Activated B cell treated with CpG ODN at 0.5 μM for 24 hours (primary cell): ENCODE measurements at regions of chr5 and their contacts with region 1.

Region 1: DNA sequence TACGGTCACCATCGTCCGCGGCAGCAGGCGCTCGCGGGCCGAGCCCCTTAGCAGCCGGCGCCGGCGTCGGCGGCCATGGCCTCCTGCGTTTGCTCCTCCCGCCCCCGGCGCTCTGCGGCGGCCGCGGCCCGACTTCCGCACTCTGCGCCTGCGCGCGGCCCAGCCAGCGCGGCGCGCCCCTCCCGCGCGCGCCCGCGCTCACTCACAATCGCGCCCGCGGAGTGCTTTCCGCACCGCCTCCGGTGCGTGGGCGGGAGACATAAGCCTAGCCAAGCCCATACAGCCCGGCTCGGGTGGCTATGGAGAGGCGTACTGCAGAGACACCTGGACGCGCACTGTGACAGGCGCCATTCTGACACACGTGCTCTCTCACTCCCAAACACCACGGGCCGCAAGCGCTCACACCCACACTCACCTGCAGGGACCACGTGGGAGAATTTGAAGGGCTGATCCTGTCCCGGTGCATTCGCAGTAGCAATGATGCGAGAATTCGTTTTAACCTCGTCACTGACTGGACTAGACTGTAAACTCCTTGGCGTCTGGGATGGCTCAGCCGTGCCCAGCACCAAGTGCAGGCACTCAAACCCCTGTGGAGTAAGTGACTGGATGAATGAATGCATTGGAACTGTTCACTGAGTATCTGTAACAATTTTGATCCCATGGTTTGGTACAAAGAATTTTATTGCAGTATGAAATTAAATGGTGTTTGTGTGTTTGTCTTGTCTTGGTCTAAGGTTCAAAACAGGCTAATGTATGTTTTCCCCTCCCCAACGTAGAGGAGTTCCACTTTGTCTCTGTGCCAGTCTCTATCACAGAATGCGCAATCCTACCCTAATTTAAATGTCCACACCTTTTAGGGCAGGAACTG is at the start of gene RNF145:
- DNase-seq: peak; percentile 93
- ATAC-seq: peak; percentile 79
- H3K4me3 Mint-ChIP-seq: peak within 1 kb of the TSS; percentile 97
- H3K27ac Mint-ChIP-seq: peak within 1 kb of the TSS; percentile 96
- H3K4me1 Mint-ChIP-seq: peaks cover 57% of the 10 kb centered on the region
- H3K27me3 Mint-ChIP-seq: no peaks in the 10 kb centered on the region
- CTCF ChIP-seq: no peak
- total RNA-seq, gene RNF145: 66.1 and 79.1 TPM in 2 replicates

Region 2: GRCh38 chr5:159178978-159179377 is 30.7 kb before region 1 on chr5:
- CTCF ChIA-PET with region 1: no interaction called
- POLR2A ChIA-PET with region 1: interaction called, 12 read pairs
- intact Hi-C with region 1: loop called (anchors 1 kb)
- DNase-seq: no peak
- ATAC-seq: peak; percentile 74
- H3K4me3 Mint-ChIP-seq: peak overlapping the region; percentile 41
- H3K27ac Mint-ChIP-seq: peak overlapping the region; percentile 93
- H3K4me1 Mint-ChIP-seq: peaks cover 56% of the 10 kb centered on the region
- H3K27me3 Mint-ChIP-seq: no peaks in the 10 kb centered on the region
- CTCF ChIP-seq: no peak

Region 3: GRCh38 chr5:159184858-159185381 is 24.8 kb before region 1 on chr5:
- CTCF ChIA-PET with region 1: no interaction called
- POLR2A ChIA-PET with region 1: interaction called, 15 read pairs
- intact Hi-C with region 1: loop called (anchors 1 kb)
- DNase-seq: no peak
- ATAC-seq: peak; percentile 65
- H3K4me3 Mint-ChIP-seq: peak overlapping the region; percentile 53
- H3K27ac Mint-ChIP-seq: peak overlapping the region; percentile 86
- H3K4me1 Mint-ChIP-seq: peaks cover 75% of the 10 kb centered on the region
- H3K27me3 Mint-ChIP-seq: no peaks in the 10 kb centered on the region
- CTCF ChIP-seq: no peak

Region 4: DNA sequence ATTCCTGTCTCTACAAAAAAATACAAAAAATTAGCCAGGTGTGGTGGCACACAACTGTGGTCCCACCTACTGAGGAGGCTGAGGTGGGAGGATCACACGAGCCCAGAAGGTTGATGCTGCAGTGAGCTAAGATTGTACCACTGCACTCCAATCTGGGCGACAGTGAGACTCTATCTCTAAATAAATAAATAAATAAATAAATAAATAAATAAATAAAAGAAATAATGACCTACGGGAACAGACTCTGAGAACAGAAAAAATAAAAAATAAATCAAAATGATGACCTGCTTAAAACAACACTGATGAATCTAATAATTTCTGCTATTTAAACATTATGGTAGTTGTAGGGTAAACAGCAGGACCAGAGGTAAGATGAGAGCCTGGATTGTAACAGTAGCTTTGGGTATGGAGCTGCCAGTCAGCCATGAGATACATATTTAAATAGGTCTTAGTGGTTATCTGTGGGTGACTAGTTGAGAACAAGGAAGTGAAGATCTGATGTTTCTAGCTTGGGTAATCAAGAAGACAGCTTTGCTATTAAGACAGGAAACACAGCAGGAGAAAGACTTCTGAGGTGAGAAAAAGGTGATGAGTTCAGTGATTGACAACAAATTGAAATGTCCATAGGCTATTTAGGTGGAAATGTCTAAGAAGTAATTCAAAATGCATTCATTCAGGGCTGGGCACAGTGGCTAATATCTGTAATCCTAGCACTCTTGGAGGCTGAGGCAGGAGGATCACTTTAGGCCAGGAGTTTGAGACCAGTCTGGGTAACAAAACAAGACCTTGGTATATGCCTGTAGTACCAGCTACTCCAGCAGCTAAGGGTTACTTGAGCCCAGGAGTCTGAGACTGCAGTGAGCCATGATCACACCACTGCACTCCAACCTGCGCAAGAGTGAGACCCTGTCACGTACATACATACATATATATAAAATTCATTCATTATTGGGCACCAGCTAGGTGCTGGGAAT is 11.3 kb before region 1 on chr5:
- CTCF ChIA-PET with region 1: interaction called, 11 read pairs
- POLR2A ChIA-PET with region 1: interaction called, 49 read pairs
- intact Hi-C with region 1: loop called (anchors 1 kb)
- DNase-seq: no peak
- ATAC-seq: peak; percentile 98
- H3K4me3 Mint-ChIP-seq: peak overlapping the region; percentile 73
- H3K27ac Mint-ChIP-seq: peak overlapping the region; percentile 91
- H3K4me1 Mint-ChIP-seq: peaks cover 57% of the 10 kb centered on the region
- H3K27me3 Mint-ChIP-seq: no peaks in the 10 kb centered on the region
- CTCF ChIP-seq: no peak

Region 5: DNA sequence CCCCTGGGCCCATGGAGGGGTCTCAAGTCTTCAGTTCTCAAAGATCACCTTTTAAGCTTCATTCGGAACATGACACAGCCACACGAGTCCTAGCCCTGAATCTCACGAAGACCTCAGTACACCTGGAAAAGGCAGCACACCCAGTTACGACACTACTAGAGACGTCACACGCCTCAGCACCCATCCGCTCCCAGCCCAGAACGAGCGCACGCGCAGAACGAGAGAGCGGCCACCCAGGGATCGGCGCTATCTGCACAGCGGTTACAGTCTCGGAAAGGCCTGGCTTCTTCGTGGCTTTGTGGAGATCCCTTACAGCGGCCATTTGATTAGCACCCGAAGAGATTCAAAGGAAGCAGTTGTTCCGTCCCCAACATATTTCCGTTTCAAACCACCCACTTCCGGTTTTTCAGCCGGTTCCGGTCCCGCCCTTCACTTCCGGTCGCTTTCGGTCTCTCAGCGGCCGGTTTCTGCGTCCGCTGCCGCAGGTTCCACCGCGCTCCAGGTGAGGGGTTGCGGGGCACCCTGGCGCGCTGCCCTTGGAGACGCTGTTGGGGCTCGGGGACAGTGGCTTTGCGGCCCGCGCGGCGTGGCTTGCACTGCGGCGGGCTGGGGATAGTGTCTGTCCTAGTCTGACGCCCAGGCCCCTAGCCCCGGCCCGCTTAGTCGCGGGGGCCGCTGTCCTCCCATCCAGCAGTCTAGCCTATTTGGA is 53.3 kb after region 1 on chr5 and contains the start of gene UBLCP1:
- CTCF ChIA-PET with region 1: no interaction called
- POLR2A ChIA-PET with region 1: interaction called, 8 read pairs
- intact Hi-C with region 1: loop called (anchors 1 kb)
- DNase-seq: peak; percentile 78
- ATAC-seq: peak; percentile 83
- H3K4me3 Mint-ChIP-seq: peak within 1 kb of the TSS; percentile 99
- H3K27ac Mint-ChIP-seq: peak within 1 kb of the TSS; percentile 99
- H3K4me1 Mint-ChIP-seq: peaks cover 39% of the 10 kb centered on the region
- H3K27me3 Mint-ChIP-seq: no peaks in the 10 kb centered on the region
- CTCF ChIP-seq: no peak
- total RNA-seq, gene UBLCP1: 40.3 and 44.8 TPM in 2 replicates